ENCODE measurements at regions of chr19 and their contacts with region 1.

Region 1: DNA sequence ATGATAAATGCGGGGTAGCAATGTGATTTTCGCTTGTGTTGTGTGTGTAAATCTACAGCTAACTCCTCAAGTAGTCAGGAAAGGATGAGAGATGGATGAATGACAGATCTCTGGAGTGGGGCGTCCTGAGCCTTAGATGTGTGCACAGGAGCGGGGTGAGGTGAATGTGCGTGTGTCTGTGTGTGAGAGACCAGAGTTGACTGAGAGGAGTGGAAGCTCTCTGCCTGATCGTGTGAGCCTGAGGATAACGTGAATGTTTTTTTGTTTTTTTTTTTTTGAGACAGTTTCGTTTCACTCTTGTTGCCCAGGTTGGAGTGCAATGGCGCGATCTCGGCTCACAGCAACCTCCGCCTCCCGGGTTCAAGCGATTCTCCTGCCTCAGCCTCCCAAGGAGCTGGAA is 805 bp downstream of the ZNF461 start:
- DNase-seq: no peak
- H3K4me3 Mint-ChIP-seq: peak overlapping the region; percentile 99
- H3K27ac Mint-ChIP-seq: peak overlapping the region; percentile 26
- H3K4me1 Mint-ChIP-seq: peaks cover 16% of the 10 kb centered on the region
- H3K27me3 Mint-ChIP-seq: no peaks in the 10 kb centered on the region

Region 2: GRCh38 chr19:36573020-36573885 is 92.6 kb before region 1 on chr19 and contains the start of gene ZNF529:
- intact Hi-C with region 1: loop called (anchors 1 kb)
- DNase-seq: peak; percentile 85
- H3K4me3 Mint-ChIP-seq: peak within 1 kb of the TSS; percentile 89
- H3K27ac Mint-ChIP-seq: peak within 1 kb of the TSS; percentile 98
- H3K4me1 Mint-ChIP-seq: peaks cover 31% of the 10 kb centered on the region
- H3K27me3 Mint-ChIP-seq: no peaks in the 10 kb centered on the region
- total RNA-seq, gene ZNF529: 20.3 and 20.7 TPM in 2 replicates

Region 3: GRCh38 chr19:36605101-36605876 is 60.5 kb before region 1 on chr19 and contains the start of gene ZNF382:
- intact Hi-C with region 1: loop called (anchors 1 kb)
- DNase-seq: peak; percentile 85
- H3K4me3 Mint-ChIP-seq: peak within 1 kb of the TSS; percentile 90
- H3K27ac Mint-ChIP-seq: peak within 1 kb of the TSS; percentile 95
- H3K4me1 Mint-ChIP-seq: peaks cover 26% of the 10 kb centered on the region
- H3K27me3 Mint-ChIP-seq: no peaks in the 10 kb centered on the region
- total RNA-seq, gene ZNF382: 10.2 and 10.8 TPM in 2 replicates

Region 4: DNA sequence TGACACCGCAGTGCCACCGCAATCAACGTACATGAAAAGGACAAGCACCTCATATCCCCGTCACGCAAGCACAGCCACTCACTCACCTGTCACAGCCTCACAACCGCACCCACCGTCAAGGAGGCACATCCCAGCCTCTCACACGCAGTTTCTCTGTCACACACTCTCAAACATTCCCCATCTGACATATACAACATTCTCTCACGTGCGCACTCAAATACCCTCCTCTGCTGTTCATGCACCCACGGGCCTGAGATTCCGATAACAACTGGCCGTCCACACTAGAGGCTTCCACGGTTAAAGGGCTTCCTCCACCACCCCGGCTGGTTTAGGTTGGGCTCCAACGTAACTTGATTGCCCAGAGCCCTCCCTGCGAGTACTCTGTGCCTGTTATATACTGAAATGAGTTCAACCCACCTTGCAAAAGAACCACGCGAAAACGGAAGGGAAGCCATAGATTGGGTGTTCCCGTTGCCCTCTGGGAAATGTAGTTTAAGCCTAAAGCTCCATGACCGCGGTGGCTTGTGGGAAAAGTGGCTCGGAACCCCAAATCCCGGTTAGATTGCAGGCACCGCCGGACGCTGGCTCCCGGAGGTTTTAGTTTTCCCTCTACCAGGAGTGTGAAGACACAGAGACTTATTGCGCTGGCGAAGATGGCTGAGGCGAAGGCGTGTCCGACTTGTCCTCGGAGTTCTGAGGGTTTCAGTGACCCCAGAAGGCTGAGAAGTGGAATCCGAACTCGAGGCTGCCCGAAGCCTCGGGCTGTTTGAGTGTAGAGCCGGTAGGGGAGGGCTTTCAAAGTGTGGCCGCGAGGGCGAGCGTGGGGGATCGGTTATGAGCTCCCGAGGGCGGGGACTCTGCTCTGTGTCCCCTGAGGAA is 1113.5 kb after region 1 on chr19 and contains the start of gene ZNF573:
- intact Hi-C with region 1: loop called (anchors 2 kb)
- DNase-seq: peak; percentile 73
- H3K4me3 Mint-ChIP-seq: peak within 1 kb of the TSS; percentile 95
- H3K27ac Mint-ChIP-seq: peak within 1 kb of the TSS; percentile 86
- H3K4me1 Mint-ChIP-seq: peaks cover 15% of the 10 kb centered on the region
- H3K27me3 Mint-ChIP-seq: no peaks in the 10 kb centered on the region
- total RNA-seq, gene ZNF573: 3.7 and 5.6 TPM in 2 replicates

Measured in activated T-helper 1 cell treated with anti-CD3 and anti-CD28 coated beads, Interleukin-12 subunit alpha, Interleukin-12 subunit beta, Interleukin-2, Interleukin-4 antibody, amounts not matched to agents 30 ng/mL and 10 ng/mL and 1 ng/mL, durations not matched to agents 14 hours and 24 hours and 36 hours (primary cell).